ENCODE measurements at regions of chr1 and their contacts with region 1.

Region 1: DNA sequence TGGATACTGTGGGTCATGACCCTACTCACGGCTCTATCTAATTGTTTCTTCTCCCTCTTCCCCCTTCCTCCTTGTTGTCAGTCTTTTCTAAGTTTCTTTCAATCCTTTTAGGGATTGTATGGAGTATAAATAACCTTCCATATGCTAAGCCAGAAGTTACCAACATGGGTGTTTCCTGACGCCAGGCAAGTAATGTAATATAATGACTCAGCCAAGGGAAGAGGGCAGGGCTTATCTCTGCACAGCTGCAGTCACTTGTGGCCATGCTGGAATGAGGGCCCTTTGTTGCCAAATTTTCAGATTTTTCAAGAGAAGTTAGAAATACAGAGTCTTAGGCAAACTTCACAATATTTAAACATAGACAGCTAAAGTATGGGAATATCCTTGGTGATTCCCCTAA is 194.6 kb downstream of the ST6GALNAC3 start:
- DNase-seq: no peak
- ATAC-seq: no peak
- H3K4me3 ChIP-seq: no peak overlapping the region
- H3K4me3 Mint-ChIP-seq: peak overlapping the region in 7 of 10 donors; percentile 63 to 86 (median 70)
- H3K27ac ChIP-seq: no peak overlapping the region
- H3K27ac Mint-ChIP-seq: peak overlapping the region; percentile 27 to 95 (median 58)
- H3K4me1 ChIP-seq: peaks cover 29 to 51% of the 10 kb centered on the region in 2 donors
- H3K4me1 Mint-ChIP-seq: peaks cover 34 to 93% (median 79%) of the 10 kb centered on the region in 7 donors
- H3K27me3 ChIP-seq: no peaks in the 10 kb centered on the region
- H3K27me3 Mint-ChIP-seq: peaks cover 0 to 3% (median 0%) of the 10 kb centered on the region in 5 donors

Region 2: GRCh38 chr1:75724472-75725022 is 544.6 kb before region 1 on chr1 and contains the start of gene ACADM:
- CTCF ChIA-PET with region 1: no interaction called
- POLR2A ChIA-PET with region 1: no interaction called
- intact Hi-C with region 1: loop called in 1 of 2 experiments (anchors 10 kb)
- DNase-seq: peak; percentile 68 to 93 (median 79)
- ATAC-seq: peak; percentile 98
- H3K4me3 ChIP-seq: peak within 1 kb of the TSS; percentile 92
- H3K4me3 Mint-ChIP-seq: peak within 1 kb of the TSS; percentile 94 to 100 (median 98)
- H3K27ac ChIP-seq: peak within 1 kb of the TSS; percentile 89
- H3K27ac Mint-ChIP-seq: peak within 1 kb of the TSS; percentile 92 to 99 (median 97)
- H3K4me1 ChIP-seq: peaks cover 5 to 12% of the 10 kb centered on the region in 2 donors
- H3K4me1 Mint-ChIP-seq: peaks cover 29 to 75% (median 64%) of the 10 kb centered on the region in 7 donors
- H3K27me3 ChIP-seq: no peaks in the 10 kb centered on the region
- H3K27me3 Mint-ChIP-seq: peaks cover 0 to 2% (median 0%) of the 10 kb centered on the region in 5 donors
- total RNA-seq, gene ACADM: 11.1 to 36.4 (median 32.9) TPM

Region 3: GRCh38 chr1:76090283-76091203 is 178.6 kb before region 1 on chr1:
- CTCF ChIA-PET with region 1: no interaction called
- POLR2A ChIA-PET with region 1: no interaction called
- intact Hi-C with region 1: no loop called
- DNase-seq: no peak
- ATAC-seq: no peak
- H3K4me3 ChIP-seq: no peak overlapping the region
- H3K4me3 Mint-ChIP-seq: no peak overlapping the region
- H3K27ac ChIP-seq: no peak overlapping the region
- H3K27ac Mint-ChIP-seq: no peak overlapping the region
- H3K4me1 ChIP-seq: no peaks in the 10 kb centered on the region
- H3K4me1 Mint-ChIP-seq: peaks cover 0 to 4% (median 0%) of the 10 kb centered on the region in 7 donors
- H3K27me3 ChIP-seq: no peaks in the 10 kb centered on the region
- H3K27me3 Mint-ChIP-seq: peaks cover 0 to 3% (median 0%) of the 10 kb centered on the region in 5 donors

Region 4: GRCh38 chr1:76254104-76255030 is 14.8 kb before region 1 on chr1:
- CTCF ChIA-PET with region 1: no interaction called
- POLR2A ChIA-PET with region 1: interaction called, 3 read pairs
- intact Hi-C with region 1: loop called (anchors 1 kb)
- DNase-seq: no peak
- ATAC-seq: no peak
- H3K4me3 ChIP-seq: no peak overlapping the region
- H3K4me3 Mint-ChIP-seq: peak overlapping the region in 3 of 10 donors; percentile 8 to 28 (median 20)
- H3K27ac ChIP-seq: no peak overlapping the region
- H3K27ac Mint-ChIP-seq: peak overlapping the region in 7 of 9 donors; percentile 7 to 84 (median 32)
- H3K4me1 ChIP-seq: peaks cover 0 to 45% of the 10 kb centered on the region in 2 donors
- H3K4me1 Mint-ChIP-seq: peaks cover 22 to 83% (median 69%) of the 10 kb centered on the region in 7 donors
- H3K27me3 ChIP-seq: no peaks in the 10 kb centered on the region
- H3K27me3 Mint-ChIP-seq: no peaks in the 10 kb centered on the region

Region 5: DNA sequence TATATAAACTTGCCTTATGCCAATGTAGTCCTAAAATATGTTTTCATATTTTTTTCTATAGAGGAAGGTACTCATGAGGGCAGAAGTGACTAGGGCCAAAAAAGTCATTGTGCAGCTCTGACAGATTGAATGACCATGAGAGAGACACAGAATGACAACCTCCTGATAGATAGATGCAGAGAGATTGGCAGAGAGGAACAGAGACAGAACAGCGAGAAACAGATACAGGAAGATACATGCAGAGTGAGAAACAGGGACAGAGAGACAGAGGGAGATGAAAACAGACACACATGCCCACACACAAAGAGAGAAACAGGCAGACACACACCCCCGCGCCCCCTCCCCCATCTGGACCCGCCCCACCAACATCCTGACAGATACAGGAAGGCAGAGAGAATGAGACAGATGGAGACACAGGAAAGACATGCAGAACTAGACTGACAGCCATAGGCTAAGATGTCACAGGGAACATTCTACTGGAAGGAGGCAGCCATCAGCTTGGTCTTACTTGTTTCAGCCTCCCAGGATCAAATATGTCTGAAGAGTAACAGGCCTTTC is 16.5 kb after region 1 on chr1:
- CTCF ChIA-PET with region 1: no interaction called
- POLR2A ChIA-PET with region 1: interaction called, 6 read pairs
- intact Hi-C with region 1: loop called (anchors 1 kb)
- DNase-seq: peak in 5 of 9 donors; percentile 30 to 51 (median 37)
- ATAC-seq: peak; percentile 54
- H3K4me3 ChIP-seq: no peak overlapping the region
- H3K4me3 Mint-ChIP-seq: peak overlapping the region in 9 of 10 donors; percentile 15 to 75 (median 59)
- H3K27ac ChIP-seq: peak overlapping the region; percentile 6
- H3K27ac Mint-ChIP-seq: peak overlapping the region; percentile 33 to 95 (median 70)
- H3K4me1 ChIP-seq: peaks cover 8 to 54% of the 10 kb centered on the region in 2 donors
- H3K4me1 Mint-ChIP-seq: peaks cover 16 to 92% (median 64%) of the 10 kb centered on the region in 7 donors
- H3K27me3 ChIP-seq: no peaks in the 10 kb centered on the region
- H3K27me3 Mint-ChIP-seq: no peaks in the 10 kb centered on the region

Region 6: DNA sequence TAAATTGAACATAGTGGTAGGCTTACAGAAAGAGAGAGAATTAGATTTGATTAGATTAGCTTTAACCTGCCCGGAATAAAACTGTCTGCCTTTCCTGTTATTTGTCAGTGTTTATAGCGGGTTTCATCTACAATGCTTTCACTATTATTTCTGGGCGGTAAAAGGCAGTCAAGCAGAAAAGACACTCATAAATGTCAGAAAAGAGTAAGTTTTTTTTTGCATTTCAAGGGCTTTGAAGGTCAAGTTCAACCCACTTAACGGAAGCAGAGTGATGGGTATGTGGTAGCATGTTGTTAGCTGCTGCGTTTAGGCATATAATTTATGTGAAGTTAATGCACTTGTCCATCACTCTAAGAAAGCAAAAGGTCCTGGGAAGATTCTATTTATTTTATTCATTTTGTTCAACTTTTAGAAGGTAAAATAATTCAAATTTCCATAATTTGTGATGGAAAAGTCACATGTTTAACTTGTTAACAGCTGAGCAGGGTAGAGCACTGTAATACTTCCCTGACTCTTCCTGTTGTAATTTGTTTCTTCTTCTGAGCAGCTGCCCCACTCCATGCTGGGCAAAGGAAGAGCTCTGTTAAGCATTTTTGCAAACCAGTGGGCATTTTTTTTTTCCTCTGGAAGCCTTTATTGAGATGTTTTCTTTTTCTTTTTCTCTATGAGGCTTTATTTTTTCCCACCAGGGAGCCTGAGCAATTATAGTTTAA is 25.5 kb after region 1 on chr1:
- CTCF ChIA-PET with region 1: interaction called, 3 read pairs
- POLR2A ChIA-PET with region 1: interaction called, 4 read pairs
- intact Hi-C with region 1: loop called (anchors 1 to 2 kb)
- DNase-seq: peak in 5 of 9 donors; percentile 21 to 59 (median 49)
- ATAC-seq: peak; percentile 62
- H3K4me3 ChIP-seq: peak overlapping the region; percentile 7
- H3K4me3 Mint-ChIP-seq: peak overlapping the region; percentile 27 to 83 (median 69)
- H3K27ac ChIP-seq: peak overlapping the region; percentile 41
- H3K27ac Mint-ChIP-seq: peak overlapping the region; percentile 63 to 88 (median 81)
- H3K4me1 ChIP-seq: peaks cover 41 to 63% of the 10 kb centered on the region in 2 donors
- H3K4me1 Mint-ChIP-seq: peaks cover 21 to 93% (median 77%) of the 10 kb centered on the region in 7 donors
- H3K27me3 ChIP-seq: no peaks in the 10 kb centered on the region
- H3K27me3 Mint-ChIP-seq: peaks cover 0 to 2% (median 0%) of the 10 kb centered on the region in 5 donors

Region 7: GRCh38 chr1:76302711-76303339 is 33.7 kb after region 1 on chr1:
- CTCF ChIA-PET with region 1: interaction called, 3 read pairs
- POLR2A ChIA-PET with region 1: interaction called, 4 read pairs
- intact Hi-C with region 1: loop called in 1 of 2 experiments (anchors 1 kb)
- DNase-seq: no peak
- ATAC-seq: no peak
- H3K4me3 ChIP-seq: no peak overlapping the region
- H3K4me3 Mint-ChIP-seq: peak overlapping the region in 4 of 10 donors; percentile 10 to 50 (median 30)
- H3K27ac ChIP-seq: no peak overlapping the region
- H3K27ac Mint-ChIP-seq: peak overlapping the region in 5 of 9 donors; percentile 41 to 80 (median 73)
- H3K4me1 ChIP-seq: peaks cover 0 to 20% of the 10 kb centered on the region in 2 donors
- H3K4me1 Mint-ChIP-seq: peaks cover 10 to 52% (median 41%) of the 10 kb centered on the region in 7 donors
- H3K27me3 ChIP-seq: no peaks in the 10 kb centered on the region
- H3K27me3 Mint-ChIP-seq: peaks cover 0 to 2% (median 0%) of the 10 kb centered on the region in 5 donors

Region 8: GRCh38 chr1:76330991-76331603 is 61.9 kb after region 1 on chr1:
- CTCF ChIA-PET with region 1: no interaction called
- POLR2A ChIA-PET with region 1: no interaction called
- intact Hi-C with region 1: loop called in 1 of 2 experiments (anchors 5 kb)
- DNase-seq: peak in 7 of 9 donors; percentile 19 to 56 (median 51)
- ATAC-seq: peak; percentile 63
- H3K4me3 ChIP-seq: no peak overlapping the region
- H3K4me3 Mint-ChIP-seq: no peak overlapping the region
- H3K27ac ChIP-seq: no peak overlapping the region
- H3K27ac Mint-ChIP-seq: peak overlapping the region in 1 of 9 donors; percentile 16
- H3K4me1 ChIP-seq: no peaks in the 10 kb centered on the region
- H3K4me1 Mint-ChIP-seq: peaks cover 0 to 41% (median 14%) of the 10 kb centered on the region in 7 donors
- H3K27me3 ChIP-seq: no peaks in the 10 kb centered on the region
- H3K27me3 Mint-ChIP-seq: no peaks in the 10 kb centered on the region

Measured in naive thymus-derived CD4-positive, alpha-beta T cell (primary cell).